CD8-positive, alpha-beta T cell (primary cell): ENCODE measurements at regions of chr2 and their contacts with region 1.

Region 1: GRCh38 chr2:64144057-64145013 is at the start of gene PELI1:
- DNase-seq: peak; percentile 86 to 94 (median 91)
- ATAC-seq: peak; percentile 93
- H3K4me3 ChIP-seq: peak within 1 kb of the TSS; percentile 86 to 87
- H3K4me3 Mint-ChIP-seq: peak within 1 kb of the TSS; percentile 98
- H3K27ac ChIP-seq: peak within 1 kb of the TSS; percentile 78 to 91
- H3K27ac Mint-ChIP-seq: peak within 1 kb of the TSS; percentile 99
- H3K4me1 ChIP-seq: peaks cover 13% of the 10 kb centered on the region
- H3K4me1 Mint-ChIP-seq: peaks cover 34% of the 10 kb centered on the region
- H3K27me3 ChIP-seq: no peaks in the 10 kb centered on the region
- H3K27me3 Mint-ChIP-seq: no peaks in the 10 kb centered on the region
- CTCF ChIP-seq: no peak
- total RNA-seq, gene PELI1: 213 to 216 TPM

Region 2: DNA sequence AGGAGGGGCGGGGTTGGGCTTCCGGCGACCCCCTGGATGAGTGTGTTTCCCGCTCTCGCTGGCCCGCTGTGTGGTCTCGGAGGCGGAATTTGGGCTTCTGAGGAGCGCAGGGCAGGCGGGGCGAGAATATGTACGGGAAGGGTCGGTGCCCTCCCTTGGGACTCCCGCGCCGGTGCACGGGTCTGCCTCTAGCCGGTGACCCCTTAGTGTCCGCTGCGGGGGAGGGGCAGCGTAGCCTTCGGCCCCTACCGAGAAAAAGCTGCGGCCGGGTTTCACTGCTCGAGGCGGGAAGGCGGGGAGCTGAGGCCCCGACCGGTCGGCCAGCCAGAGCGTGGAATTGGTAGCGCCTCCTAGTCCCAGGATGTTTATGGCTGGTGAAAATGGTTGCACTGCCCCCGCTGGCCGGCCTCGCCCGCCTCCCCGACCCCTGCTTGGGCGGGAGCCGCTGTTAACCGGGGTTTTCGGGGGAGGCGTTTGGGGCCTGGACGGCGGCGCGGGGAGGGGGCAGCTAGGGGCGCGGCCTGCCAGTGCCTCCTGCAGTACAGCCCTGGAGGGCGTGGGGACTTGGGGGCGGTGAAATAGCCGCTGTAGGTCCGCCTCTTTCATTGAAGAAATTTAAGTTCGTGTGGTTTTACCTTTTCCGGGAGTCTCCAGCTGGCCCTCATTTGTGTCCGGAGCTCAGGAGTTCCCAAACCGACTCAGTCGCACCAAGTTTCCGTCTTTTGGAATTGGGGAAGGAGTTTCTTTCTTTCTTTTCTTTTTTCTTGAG is 302.9 kb before region 1 on chr2 and contains the start of gene UGP2:
- CTCF ChIA-PET with region 1: no interaction called
- POLR2A ChIA-PET with region 1: no interaction called
- intact Hi-C with region 1: loop called (anchors 1 to 5 kb)
- DNase-seq: peak; percentile 68 to 92 (median 83)
- ATAC-seq: peak; percentile 68
- H3K4me3 ChIP-seq: peak within 1 kb of the TSS; percentile 94 to 98
- H3K4me3 Mint-ChIP-seq: peak within 1 kb of the TSS; percentile 99
- H3K27ac ChIP-seq: peak within 1 kb of the TSS; percentile 81 to 89
- H3K27ac Mint-ChIP-seq: peak within 1 kb of the TSS; percentile 98
- H3K4me1 ChIP-seq: peaks cover 41% of the 10 kb centered on the region
- H3K4me1 Mint-ChIP-seq: peaks cover 52% of the 10 kb centered on the region
- H3K27me3 ChIP-seq: no peaks in the 10 kb centered on the region
- H3K27me3 Mint-ChIP-seq: no peaks in the 10 kb centered on the region
- CTCF ChIP-seq: peak; percentile 24
- total RNA-seq, gene UGP2: 43.9 to 48.2 TPM

Region 3: DNA sequence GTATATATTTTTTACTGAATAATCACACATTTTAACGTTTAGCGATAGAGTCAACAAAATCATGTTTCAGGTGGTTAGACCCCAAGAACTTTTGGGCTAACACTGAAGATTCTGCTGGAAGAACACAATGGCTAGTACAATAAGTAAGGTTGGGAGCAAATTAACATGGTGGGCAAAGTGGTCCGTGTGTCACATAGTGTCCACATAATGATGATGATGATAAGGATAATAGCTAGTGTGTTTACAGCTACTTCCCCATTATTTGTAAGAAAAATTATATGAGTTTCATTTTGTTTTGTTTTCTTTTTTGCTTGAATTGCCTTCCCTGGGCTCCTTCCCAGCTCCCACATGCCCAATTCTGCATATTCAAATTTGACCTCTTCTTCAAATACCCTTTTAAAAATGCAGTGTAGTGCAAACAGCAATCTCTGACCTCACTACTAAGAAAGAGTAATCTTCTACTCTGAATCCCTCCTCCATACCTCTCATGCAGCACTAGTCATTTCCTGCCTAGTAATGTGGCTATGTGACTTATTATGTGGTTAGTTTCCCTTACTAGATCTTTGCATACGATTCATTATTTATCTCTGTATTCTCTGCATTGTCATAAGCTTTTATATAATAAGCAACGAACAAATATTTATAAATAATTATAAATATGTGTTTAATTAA is 108.2 kb before region 1 on chr2:
- CTCF ChIA-PET with region 1: no interaction called
- POLR2A ChIA-PET with region 1: no interaction called
- intact Hi-C with region 1: loop called in 1 of 2 experiments (anchors 5 kb)
- DNase-seq: peak in 4 of 9 experiments; percentile 9 to 77 (median 44)
- ATAC-seq: peak; percentile 96
- H3K4me3 ChIP-seq: peak overlapping the region in 1 of 2 experiments; percentile 3
- H3K4me3 Mint-ChIP-seq: peak overlapping the region; percentile 44
- H3K27ac ChIP-seq: peak overlapping the region in 1 of 2 experiments; percentile 29
- H3K27ac Mint-ChIP-seq: peak overlapping the region; percentile 78
- H3K4me1 ChIP-seq: peaks cover 26% of the 10 kb centered on the region
- H3K4me1 Mint-ChIP-seq: peaks cover 46% of the 10 kb centered on the region
- H3K27me3 ChIP-seq: no peaks in the 10 kb centered on the region
- H3K27me3 Mint-ChIP-seq: no peaks in the 10 kb centered on the region
- CTCF ChIP-seq: no peak

Region 4: GRCh38 chr2:64101141-64101591 is 43.2 kb before region 1 on chr2:
- CTCF ChIA-PET with region 1: no interaction called
- POLR2A ChIA-PET with region 1: interaction called, 3 read pairs
- intact Hi-C with region 1: loop called in 1 of 2 experiments (anchors 2 kb)
- DNase-seq: peak in 1 of 9 experiments; percentile 31
- ATAC-seq: peak; percentile 43
- H3K4me3 ChIP-seq: no peak overlapping the region
- H3K4me3 Mint-ChIP-seq: peak overlapping the region; percentile 30
- H3K27ac ChIP-seq: no peak overlapping the region
- H3K27ac Mint-ChIP-seq: peak overlapping the region; percentile 73
- H3K4me1 ChIP-seq: peaks cover 17% of the 10 kb centered on the region
- H3K4me1 Mint-ChIP-seq: peaks cover 36% of the 10 kb centered on the region
- H3K27me3 ChIP-seq: no peaks in the 10 kb centered on the region
- H3K27me3 Mint-ChIP-seq: no peaks in the 10 kb centered on the region
- CTCF ChIP-seq: no peak

Region 5: DNA sequence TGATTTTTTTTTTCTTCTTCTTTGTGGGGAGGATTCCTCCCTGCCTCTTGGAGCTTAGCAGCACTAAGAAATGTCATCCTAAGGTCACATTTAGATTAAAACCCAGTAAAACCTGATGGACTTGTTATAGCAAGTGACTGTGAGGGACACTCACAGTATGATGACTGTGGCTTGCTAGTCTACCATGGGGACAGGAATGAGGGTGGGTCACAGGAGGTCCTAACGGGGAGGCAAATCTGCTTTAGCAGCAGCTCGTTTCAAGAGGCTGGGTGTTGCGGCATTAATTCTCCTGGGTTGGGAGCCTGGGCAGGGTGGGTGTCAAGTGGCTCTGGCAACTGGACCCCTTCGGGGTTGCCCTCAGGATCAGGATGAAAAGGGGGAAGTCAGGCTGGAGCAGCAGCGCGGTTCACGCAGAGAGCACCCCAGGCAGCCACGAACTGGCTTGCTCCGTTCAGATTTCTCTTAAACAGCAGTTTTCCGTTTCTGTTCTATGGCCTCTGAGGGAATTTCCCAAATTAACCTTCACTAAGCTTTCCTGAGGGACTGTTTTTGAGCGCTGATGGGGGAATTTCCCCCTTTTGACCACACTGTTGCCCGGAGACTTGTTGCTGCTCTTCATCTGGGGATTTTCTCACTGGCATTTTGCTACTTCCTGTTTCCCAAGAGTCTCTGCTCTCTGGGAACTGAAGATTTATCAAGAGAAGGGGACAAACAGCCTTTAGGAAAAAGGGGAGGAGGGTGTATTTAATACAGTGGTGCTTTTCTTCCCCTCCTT is 59.7 kb after region 1 on chr2:
- CTCF ChIA-PET with region 1: no interaction called
- POLR2A ChIA-PET with region 1: interaction called, 3 read pairs
- intact Hi-C with region 1: loop called in 1 of 2 experiments (anchors 2 kb)
- DNase-seq: peak in 4 of 9 experiments; percentile 6 to 89 (median 48)
- ATAC-seq: peak; percentile 42
- H3K4me3 ChIP-seq: peak overlapping the region; percentile 25 to 42
- H3K4me3 Mint-ChIP-seq: peak overlapping the region; percentile 71
- H3K27ac ChIP-seq: peak overlapping the region; percentile 13 to 40
- H3K27ac Mint-ChIP-seq: peak overlapping the region; percentile 87
- H3K4me1 ChIP-seq: peaks cover 29% of the 10 kb centered on the region
- H3K4me1 Mint-ChIP-seq: peaks cover 64% of the 10 kb centered on the region
- H3K27me3 ChIP-seq: no peaks in the 10 kb centered on the region
- H3K27me3 Mint-ChIP-seq: no peaks in the 10 kb centered on the region
- CTCF ChIP-seq: no peak

Region 6: DNA sequence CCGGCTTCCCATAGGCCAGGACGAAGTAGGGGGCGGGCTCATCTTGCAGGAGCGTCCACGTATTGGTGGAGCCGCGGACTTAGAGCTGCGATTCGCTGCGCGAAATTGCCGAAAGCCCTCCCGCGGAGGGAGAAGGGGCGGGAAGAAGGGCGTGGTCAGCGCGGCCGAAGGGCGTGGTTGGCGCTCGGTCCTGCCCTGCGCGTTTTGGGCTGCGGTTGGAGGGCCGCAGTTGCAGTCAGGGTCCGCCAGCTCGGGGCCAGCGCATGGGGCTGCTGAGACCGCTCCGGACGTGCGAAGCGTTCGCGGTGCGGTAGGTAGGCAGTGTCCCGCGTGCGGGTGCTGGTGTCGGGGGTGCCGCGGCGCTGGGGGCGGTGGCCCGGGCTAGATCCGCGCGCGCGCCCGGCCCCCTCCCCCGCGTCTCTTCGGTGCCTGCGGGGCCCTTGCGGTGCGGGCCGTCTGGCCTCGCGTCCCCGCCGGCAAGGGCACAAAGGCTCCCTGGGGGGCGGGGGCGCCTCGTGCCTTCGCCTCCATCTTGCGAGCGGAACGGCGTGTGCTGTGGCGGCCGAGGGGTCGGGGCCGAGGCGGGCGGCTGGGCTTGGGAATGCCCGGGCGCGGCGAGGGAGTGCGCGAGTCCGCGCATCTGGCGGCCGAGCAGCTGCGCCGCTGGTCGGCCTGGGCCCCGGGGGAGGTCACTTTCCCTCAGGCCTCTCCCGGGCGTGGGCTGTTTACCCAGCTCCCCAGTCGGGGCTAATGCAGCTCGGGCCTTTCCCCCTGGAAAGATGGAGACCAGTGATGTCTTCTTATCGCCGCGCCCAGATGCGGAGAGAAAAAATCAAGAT is 912.1 kb after region 1 on chr2 and contains the start of gene CEP68:
- CTCF ChIA-PET with region 1: no interaction called
- POLR2A ChIA-PET with region 1: no interaction called
- intact Hi-C with region 1: loop called (anchors 5 kb)
- DNase-seq: peak; percentile 89 to 98 (median 96)
- ATAC-seq: peak; percentile 89
- H3K4me3 ChIP-seq: peak within 1 kb of the TSS; percentile 85 to 86
- H3K4me3 Mint-ChIP-seq: peak within 1 kb of the TSS; percentile 99
- H3K27ac ChIP-seq: peak within 1 kb of the TSS; percentile 62 to 72
- H3K27ac Mint-ChIP-seq: peak within 1 kb of the TSS; percentile 97
- H3K4me1 ChIP-seq: peaks cover 70% of the 10 kb centered on the region
- H3K4me1 Mint-ChIP-seq: peaks cover 73% of the 10 kb centered on the region
- H3K27me3 ChIP-seq: no peaks in the 10 kb centered on the region
- H3K27me3 Mint-ChIP-seq: no peaks in the 10 kb centered on the region
- CTCF ChIP-seq: no peak
- total RNA-seq, gene CEP68: 19.9 to 20.5 TPM

Region 7: GRCh38 chr2:65227425-65228262 is 1083.3 kb after region 1 on chr2 and contains the start of gene ACTR2:
- CTCF ChIA-PET with region 1: no interaction called
- POLR2A ChIA-PET with region 1: no interaction called
- intact Hi-C with region 1: loop called (anchors 5 to 10 kb)
- DNase-seq: peak; percentile 87 to 98 (median 94)
- ATAC-seq: peak; percentile 94
- H3K4me3 ChIP-seq: peak within 1 kb of the TSS; percentile 74 to 89
- H3K4me3 Mint-ChIP-seq: peak within 1 kb of the TSS; percentile 99
- H3K27ac ChIP-seq: peak within 1 kb of the TSS; percentile 94 to 98
- H3K27ac Mint-ChIP-seq: peak within 1 kb of the TSS; percentile 99
- H3K4me1 ChIP-seq: peaks cover 43% of the 10 kb centered on the region
- H3K4me1 Mint-ChIP-seq: peaks cover 47% of the 10 kb centered on the region
- H3K27me3 ChIP-seq: no peaks in the 10 kb centered on the region
- H3K27me3 Mint-ChIP-seq: no peaks in the 10 kb centered on the region
- CTCF ChIP-seq: no peak
- total RNA-seq, gene ACTR2: 101 to 117 TPM